Activated CD4-positive, alpha-beta T cell treated with anti-CD3 and anti-CD28 coated beads for 36 hours (primary cell): ENCODE measurements at regions of chr2 and their contacts with region 1.

Region 1: DNA sequence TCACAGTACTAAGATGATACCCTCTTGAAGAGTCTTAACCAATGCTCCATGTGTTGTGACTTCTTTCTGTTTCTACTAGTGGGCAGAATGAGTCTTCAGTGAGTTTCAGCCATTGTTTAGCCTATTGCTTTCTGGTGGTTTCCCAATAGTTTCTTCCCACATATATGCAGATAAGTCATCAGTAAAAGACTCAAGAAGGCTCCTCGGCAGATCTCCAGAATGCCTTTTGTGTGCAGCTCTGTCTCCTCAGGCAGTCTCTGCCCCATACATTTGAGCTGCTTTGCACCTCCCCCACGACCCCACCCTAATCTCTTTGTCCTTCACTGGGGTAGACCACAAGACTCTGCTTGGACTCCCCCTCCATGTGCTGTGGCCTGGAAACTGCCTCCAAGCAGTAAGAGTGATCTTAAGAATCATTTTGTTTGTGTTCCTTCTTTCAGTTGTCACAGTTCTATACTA is 71.6 kb upstream of the CHRNA1 start:
- DNase-seq: peak; percentile 68
- ATAC-seq: peak; percentile 95
- H3K4me3 Mint-ChIP-seq: peak overlapping the region; percentile 41
- H3K27ac Mint-ChIP-seq: peak overlapping the region; percentile 96
- H3K4me1 Mint-ChIP-seq: peaks cover 42% of the 10 kb centered on the region
- H3K27me3 Mint-ChIP-seq: peaks cover 2% of the 10 kb centered on the region

Region 2: GRCh38 chr2:174492963-174493431 is 342.8 kb before region 1 on chr2:
- CTCF ChIA-PET with region 1: no interaction called
- POLR2A ChIA-PET with region 1: no interaction called
- intact Hi-C with region 1: loop called in 1 of 2 experiments (anchors 10 kb)
- DNase-seq: peak; percentile 75
- ATAC-seq: peak; percentile 81
- H3K4me3 Mint-ChIP-seq: peak overlapping the region; percentile 72
- H3K27ac Mint-ChIP-seq: peak overlapping the region; percentile 95
- H3K4me1 Mint-ChIP-seq: peaks cover 79% of the 10 kb centered on the region
- H3K27me3 Mint-ChIP-seq: no peaks in the 10 kb centered on the region

Region 3: GRCh38 chr2:174778085-174778981 is 57.5 kb before region 1 on chr2:
- CTCF ChIA-PET with region 1: interaction called, 3 read pairs
- POLR2A ChIA-PET with region 1: no interaction called
- intact Hi-C with region 1: loop called (anchors 1 to 5 kb)
- DNase-seq: peak; percentile 86
- ATAC-seq: peak; percentile 94
- H3K4me3 Mint-ChIP-seq: peak overlapping the region; percentile 13
- H3K27ac Mint-ChIP-seq: peak overlapping the region; percentile 73
- H3K4me1 Mint-ChIP-seq: peaks cover 48% of the 10 kb centered on the region
- H3K27me3 Mint-ChIP-seq: no peaks in the 10 kb centered on the region

Region 4: GRCh38 chr2:174794851-174795374 is 40.9 kb before region 1 on chr2:
- CTCF ChIA-PET with region 1: interaction called, 6 read pairs
- POLR2A ChIA-PET with region 1: interaction called, 4 read pairs
- intact Hi-C with region 1: loop called (anchors 1 kb)
- DNase-seq: peak; percentile 46
- ATAC-seq: peak; percentile 73
- H3K4me3 Mint-ChIP-seq: no peak overlapping the region
- H3K27ac Mint-ChIP-seq: peak overlapping the region; percentile 48
- H3K4me1 Mint-ChIP-seq: peaks cover 26% of the 10 kb centered on the region
- H3K27me3 Mint-ChIP-seq: no peaks in the 10 kb centered on the region

Region 5: GRCh38 chr2:174846941-174847938 is 11.4 kb after region 1 on chr2:
- CTCF ChIA-PET with region 1: interaction called, 12 read pairs
- POLR2A ChIA-PET with region 1: no interaction called
- intact Hi-C with region 1: no loop called
- DNase-seq: no peak
- ATAC-seq: peak; percentile 28
- H3K4me3 Mint-ChIP-seq: peak overlapping the region; percentile 42
- H3K27ac Mint-ChIP-seq: no peak overlapping the region
- H3K4me1 Mint-ChIP-seq: peaks cover 21% of the 10 kb centered on the region
- H3K27me3 Mint-ChIP-seq: no peaks in the 10 kb centered on the region

Region 6: GRCh38 chr2:174901075-174901474 is 65.2 kb after region 1 on chr2:
- CTCF ChIA-PET with region 1: interaction called, 3 read pairs
- POLR2A ChIA-PET with region 1: no interaction called
- intact Hi-C with region 1: loop called in 1 of 2 experiments (anchors 5 kb)
- DNase-seq: peak; percentile 46
- ATAC-seq: peak; percentile 84
- H3K4me3 Mint-ChIP-seq: peak overlapping the region; percentile 36
- H3K27ac Mint-ChIP-seq: peak overlapping the region; percentile 65
- H3K4me1 Mint-ChIP-seq: peaks cover 27% of the 10 kb centered on the region
- H3K27me3 Mint-ChIP-seq: no peaks in the 10 kb centered on the region

Region 7: DNA sequence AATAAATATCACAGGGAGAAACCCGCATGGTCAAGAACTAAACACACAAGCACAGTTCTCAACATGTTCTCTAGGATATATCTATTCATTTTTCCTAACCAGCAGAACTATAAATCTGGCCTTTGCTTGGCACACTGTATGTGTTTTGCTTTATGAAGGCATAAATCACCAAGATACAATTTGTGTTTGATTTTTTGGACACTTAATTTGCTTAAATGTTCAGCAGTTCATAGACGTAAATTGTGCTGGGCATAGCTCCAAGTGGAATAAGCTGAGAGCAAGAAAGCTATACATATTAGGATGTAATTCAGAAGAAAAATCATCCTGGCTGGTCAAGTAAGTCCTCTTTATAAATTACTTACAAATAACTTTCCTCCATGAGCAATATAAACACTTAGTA is 687.2 kb after region 1 on chr2:
- CTCF ChIA-PET with region 1: no interaction called
- POLR2A ChIA-PET with region 1: no interaction called
- intact Hi-C with region 1: no loop called
- DNase-seq: no peak
- ATAC-seq: no peak
- H3K4me3 Mint-ChIP-seq: no peak overlapping the region
- H3K27ac Mint-ChIP-seq: no peak overlapping the region
- H3K4me1 Mint-ChIP-seq: no peaks in the 10 kb centered on the region
- H3K27me3 Mint-ChIP-seq: no peaks in the 10 kb centered on the region